Mammary epithelial cell (primary cell): ENCODE measurements at regions of chr9 and their contacts with region 1.

Region 1: GRCh38 chr9:93095205-93096130 is 549 bp upstream of the CARD19 start:
- DNase-seq: peak; percentile 97
- H3K4me3 ChIP-seq: peak overlapping the region; percentile 25 to 79 (median 37)
- H3K27ac ChIP-seq: peak overlapping the region; percentile 72
- H3K4me1 ChIP-seq: peaks cover 44% of the 10 kb centered on the region
- H3K27me3 ChIP-seq: no peaks in the 10 kb centered on the region
- CTCF ChIP-seq: no peak

Region 2: DNA sequence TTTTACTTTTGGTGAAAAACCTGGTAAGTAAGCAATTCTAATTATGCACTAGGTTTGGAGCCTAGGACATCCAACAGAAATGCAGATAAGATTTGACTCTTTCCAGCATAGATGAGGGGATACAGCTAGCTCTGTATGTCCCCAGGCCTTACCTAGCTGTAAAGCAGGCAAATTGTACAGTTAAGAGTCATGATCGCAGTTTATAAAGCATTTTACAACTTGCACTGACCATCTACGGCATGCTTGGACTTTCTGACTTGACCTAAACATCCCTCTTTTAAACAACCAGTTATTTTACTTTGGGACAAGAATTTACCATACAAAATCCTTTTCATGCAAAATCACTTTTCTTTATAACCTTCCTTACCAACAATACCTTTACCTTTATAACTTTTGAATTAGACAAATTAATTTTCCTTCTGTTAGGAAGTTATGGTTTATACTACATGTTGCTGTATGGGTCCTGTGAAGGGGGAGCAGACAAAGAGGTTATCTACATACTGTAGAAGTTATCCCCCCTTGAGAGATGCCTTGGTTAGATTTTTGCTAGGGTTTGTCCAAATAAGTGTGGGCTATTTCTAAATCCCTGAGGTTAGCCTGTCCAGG is 111.4 kb before region 1 on chr9:
- CTCF ChIA-PET with region 1: no interaction called
- dilution Hi-C with region 1: no loop called
- in situ Hi-C with region 1: no loop called
- intact Hi-C with region 1: loop called (anchors 5 kb)
- DNase-seq: peak; percentile 31
- H3K4me3 ChIP-seq: no peak overlapping the region
- H3K27ac ChIP-seq: no peak overlapping the region
- H3K4me1 ChIP-seq: peaks cover 16% of the 10 kb centered on the region
- H3K27me3 ChIP-seq: no peaks in the 10 kb centered on the region
- CTCF ChIP-seq: no peak

Region 3: GRCh38 chr9:93114169-93114983 is 18.9 kb after region 1 on chr9:
- CTCF ChIA-PET with region 1: no interaction called
- dilution Hi-C with region 1: no loop called
- in situ Hi-C with region 1: no loop called
- intact Hi-C with region 1: no loop called
- DNase-seq: no peak
- H3K4me3 ChIP-seq: no peak overlapping the region
- H3K27ac ChIP-seq: no peak overlapping the region
- H3K4me1 ChIP-seq: peaks cover 16% of the 10 kb centered on the region
- H3K27me3 ChIP-seq: no peaks in the 10 kb centered on the region
- CTCF ChIP-seq: no peak

Region 4: GRCh38 chr9:93134015-93134739 is 38.7 kb after region 1 on chr9 and contains the start of gene NINJ1:
- CTCF ChIA-PET with region 1: no interaction called
- dilution Hi-C with region 1: no loop called
- in situ Hi-C with region 1: no loop called
- intact Hi-C with region 1: loop called (anchors 5 kb)
- DNase-seq: peak; percentile 95
- H3K4me3 ChIP-seq: peak within 1 kb of the TSS; percentile 85 to 87 (median 86)
- H3K27ac ChIP-seq: peak within 1 kb of the TSS; percentile 85
- H3K4me1 ChIP-seq: peaks cover 34% of the 10 kb centered on the region
- H3K27me3 ChIP-seq: no peaks in the 10 kb centered on the region
- CTCF ChIP-seq: no peak
- total RNA-seq, gene NINJ1: 50.2 to 92.2 TPM